Tibial artery (tissue), 4 donors: ENCODE measurements at regions of chr13 and their contacts with region 1.

Region 1: GRCh38 chr13:41259875-41260501 is 3.4 kb downstream of the MTRF1 start:
- DNase-seq: no peak
- H3K4me3 ChIP-seq: no peak overlapping the region
- H3K27ac ChIP-seq: no peak overlapping the region
- H3K4me1 ChIP-seq: peaks cover 0 to 13% (median 5%) of the 10 kb centered on the region in 4 donors
- H3K27me3 ChIP-seq: no peaks in the 10 kb centered on the region
- CTCF ChIP-seq: no peak

Region 2: DNA sequence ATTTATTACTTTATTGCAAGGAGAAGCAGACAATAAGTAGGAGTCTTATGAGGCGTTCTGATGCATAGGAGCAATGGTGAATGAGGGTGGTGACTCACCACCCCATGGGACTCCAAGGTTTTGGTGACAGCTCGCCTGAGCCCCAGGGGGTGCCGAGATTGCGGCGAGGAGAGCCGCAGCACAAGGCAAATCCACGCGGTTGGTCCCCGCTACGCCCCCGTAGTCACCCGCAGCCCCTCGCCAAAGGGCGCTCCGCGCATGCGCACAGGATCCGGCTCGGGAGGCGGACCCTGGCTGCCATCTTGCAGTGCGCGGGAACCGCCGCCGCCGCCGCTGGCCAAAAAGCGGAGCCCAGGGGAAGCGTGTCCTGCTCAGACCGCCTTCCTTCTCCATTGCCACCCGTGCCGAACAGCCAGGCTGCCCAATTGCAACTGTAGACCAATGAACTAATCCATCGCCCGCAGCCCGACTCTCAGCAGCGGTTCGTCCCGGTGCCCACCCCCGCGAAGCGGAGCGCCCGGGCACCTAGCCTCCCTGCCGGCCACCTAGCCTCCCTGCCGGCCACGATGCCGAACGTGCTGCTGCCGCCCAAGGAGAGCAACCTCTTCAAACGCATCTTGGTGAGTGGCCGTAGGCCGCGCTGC is 51.1 kb after region 1 on chr13 and contains the start of gene NAA16:
- intact Hi-C with region 1: loop called (anchors 2 kb)
- DNase-seq: peak; percentile 87 to 94
- H3K4me3 ChIP-seq: peak within 1 kb of the TSS; percentile 91 to 97
- H3K27ac ChIP-seq: peak within 1 kb of the TSS; percentile 95 to 97
- H3K4me1 ChIP-seq: peaks cover 0 to 33% (median 17%) of the 10 kb centered on the region in 4 donors
- H3K27me3 ChIP-seq: no peaks in the 10 kb centered on the region
- CTCF ChIP-seq: peak in 1 of 2 experiments; percentile 17